HEK293T (cell line): ENCODE measurements at regions of chr19 and their contacts with region 1.

Region 1: GRCh38 chr19:54448774-54449700 is at the start of gene LENG8:
- DNase-seq: peak; percentile 94

Region 2: GRCh38 chr19:54430306-54431254 is 18.5 kb before region 1 on chr19:
- CTCF ChIA-PET with region 1: interaction called, 5 read pairs
- POLR2A ChIA-PET with region 1: interaction called, 23 read pairs
- DNase-seq: peak; percentile 86

Region 3: DNA sequence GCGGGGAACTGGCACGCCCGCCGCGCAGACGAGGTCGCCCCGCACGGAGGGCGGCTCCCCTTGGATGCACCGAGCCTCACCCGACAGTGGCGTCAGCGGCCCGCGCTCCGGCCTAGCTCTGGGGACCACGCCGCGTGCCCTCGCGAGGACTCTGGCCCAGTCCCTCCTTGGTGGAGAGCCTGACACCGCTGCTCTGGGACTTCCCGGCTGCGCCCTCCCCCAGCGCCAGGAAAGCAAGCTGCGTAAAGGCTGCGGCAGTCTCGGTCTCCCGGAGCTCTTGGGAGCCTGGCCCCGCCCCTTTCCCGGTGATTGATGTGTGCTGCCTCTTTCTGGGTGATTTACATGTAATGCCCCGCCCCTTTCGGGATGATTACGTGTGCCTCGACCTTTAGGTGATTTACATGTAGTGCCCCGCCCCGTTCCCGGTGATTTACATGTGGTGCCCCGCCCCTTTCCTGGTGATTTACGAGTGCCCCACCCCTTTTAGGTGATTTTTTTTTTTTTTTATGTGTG is 14.6 kb after region 1 on chr19 and contains the start of gene LENG9:
- CTCF ChIA-PET with region 1: interaction called, 4 read pairs
- POLR2A ChIA-PET with region 1: interaction called, 97 read pairs
- DNase-seq: peak; percentile 91

Region 4: GRCh38 chr19:54473021-54473891 is 24.2 kb after region 1 on chr19 and contains the start of gene CDC42EP5:
- CTCF ChIA-PET with region 1: no interaction called
- POLR2A ChIA-PET with region 1: interaction called, 10 read pairs
- DNase-seq: no peak